BJ (cell line): ENCODE measurements at regions of chr14 and their contacts with region 1.

Region 1: GRCh38 chr14:29016050-29016900 is 249.7 kb downstream of the FOXG1 start:
- DNase-seq: no peak
- H3K4me3 ChIP-seq: no peak overlapping the region
- H3K27me3 ChIP-seq: no peaks in the 10 kb centered on the region
- CTCF ChIP-seq: peak; percentile 95

Region 2: DNA sequence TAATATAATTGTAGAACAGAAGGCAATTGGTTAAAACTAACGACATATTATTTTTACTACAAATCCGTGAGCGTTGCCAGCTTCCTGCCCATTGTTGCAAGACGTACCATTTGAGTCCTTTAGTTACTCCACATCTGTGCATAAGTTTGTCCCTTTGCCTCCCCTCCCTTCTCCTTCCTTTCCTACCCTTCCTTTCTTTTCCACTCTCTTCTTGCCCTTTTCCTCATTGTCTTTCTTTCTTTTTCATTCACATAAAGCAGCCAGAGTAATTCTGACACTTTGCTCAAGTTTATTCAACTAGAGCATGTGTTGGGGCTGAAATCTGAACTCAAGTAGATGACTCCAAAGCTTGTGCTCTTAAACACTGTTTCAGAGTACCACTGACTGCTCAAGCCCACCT is 10.6 kb before region 1 on chr14:
- CTCF ChIA-PET with region 1: no interaction called
- POLR2A ChIA-PET with region 1: no interaction called
- DNase-seq: no peak
- H3K4me3 ChIP-seq: no peak overlapping the region
- H3K27me3 ChIP-seq: no peaks in the 10 kb centered on the region
- CTCF ChIP-seq: no peak

Region 3: GRCh38 chr14:29222671-29223268 is 206.5 kb after region 1 on chr14:
- CTCF ChIA-PET with region 1: interaction called, 38 read pairs
- POLR2A ChIA-PET with region 1: no interaction called
- DNase-seq: no peak
- H3K4me3 ChIP-seq: no peak overlapping the region
- H3K27me3 ChIP-seq: no peaks in the 10 kb centered on the region
- CTCF ChIP-seq: peak; percentile 83